Astrocyte of the cerebellum (primary cell): ENCODE measurements at regions of chr2 and their contacts with region 1.

Region 1: DNA sequence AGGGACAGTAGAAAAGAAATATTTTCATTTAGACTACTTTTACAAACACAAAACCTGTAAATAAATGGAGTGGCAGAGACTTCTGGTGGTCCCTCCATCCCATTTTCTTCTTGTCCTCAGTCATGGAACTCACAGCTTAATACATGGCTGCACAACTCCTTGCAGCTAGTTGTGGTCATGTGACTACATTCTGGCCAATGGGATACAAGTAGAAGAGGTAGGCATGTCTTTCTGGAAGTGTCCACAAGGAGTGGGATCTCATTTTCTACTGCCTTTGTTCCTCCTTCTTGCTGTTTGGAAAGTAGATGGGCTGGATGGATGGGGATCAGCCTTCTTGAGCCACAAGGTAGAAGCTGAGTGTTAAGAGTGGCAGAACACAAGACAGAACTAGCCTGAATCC is 555.8 kb downstream of the SATB2 start:
- DNase-seq: no peak
- H3K4me3 ChIP-seq: no peak overlapping the region
- CTCF ChIP-seq: no peak

Region 2: GRCh38 chr2:198863655-198864054 is 38.2 kb before region 1 on chr2:
- in situ Hi-C with region 1: no loop called
- DNase-seq: no peak
- H3K4me3 ChIP-seq: no peak overlapping the region
- CTCF ChIP-seq: no peak

Region 3: GRCh38 chr2:198961547-198961946 is 59.7 kb after region 1 on chr2:
- in situ Hi-C with region 1: loop called (anchors 5 kb)
- DNase-seq: no peak
- H3K4me3 ChIP-seq: no peak overlapping the region
- CTCF ChIP-seq: peak; percentile 9